ENCODE measurements at regions of chr12 and their contacts with region 1.

Region 1: GRCh38 chr12:108562348-108563135 is at the start of gene ISCU:
- DNase-seq: peak; percentile 98
- H3K4me3 ChIP-seq: peak within 1 kb of the TSS; percentile 81 to 97 (median 86)
- H3K27ac ChIP-seq: peak within 1 kb of the TSS; percentile 93 to 98 (median 96)
- H3K4me1 ChIP-seq: peaks cover 0 to 73% (median 65%) of the 10 kb centered on the region in 4 donors
- H3K27me3 ChIP-seq: no peaks in the 10 kb centered on the region
- CTCF ChIP-seq: no peak
- EP300 ChIP-seq: no peak
- POLR2A ChIP-seq: peak; percentile 82 to 91
- total RNA-seq, gene ISCU: 197 to 294 (median 260) TPM

Region 2: DNA sequence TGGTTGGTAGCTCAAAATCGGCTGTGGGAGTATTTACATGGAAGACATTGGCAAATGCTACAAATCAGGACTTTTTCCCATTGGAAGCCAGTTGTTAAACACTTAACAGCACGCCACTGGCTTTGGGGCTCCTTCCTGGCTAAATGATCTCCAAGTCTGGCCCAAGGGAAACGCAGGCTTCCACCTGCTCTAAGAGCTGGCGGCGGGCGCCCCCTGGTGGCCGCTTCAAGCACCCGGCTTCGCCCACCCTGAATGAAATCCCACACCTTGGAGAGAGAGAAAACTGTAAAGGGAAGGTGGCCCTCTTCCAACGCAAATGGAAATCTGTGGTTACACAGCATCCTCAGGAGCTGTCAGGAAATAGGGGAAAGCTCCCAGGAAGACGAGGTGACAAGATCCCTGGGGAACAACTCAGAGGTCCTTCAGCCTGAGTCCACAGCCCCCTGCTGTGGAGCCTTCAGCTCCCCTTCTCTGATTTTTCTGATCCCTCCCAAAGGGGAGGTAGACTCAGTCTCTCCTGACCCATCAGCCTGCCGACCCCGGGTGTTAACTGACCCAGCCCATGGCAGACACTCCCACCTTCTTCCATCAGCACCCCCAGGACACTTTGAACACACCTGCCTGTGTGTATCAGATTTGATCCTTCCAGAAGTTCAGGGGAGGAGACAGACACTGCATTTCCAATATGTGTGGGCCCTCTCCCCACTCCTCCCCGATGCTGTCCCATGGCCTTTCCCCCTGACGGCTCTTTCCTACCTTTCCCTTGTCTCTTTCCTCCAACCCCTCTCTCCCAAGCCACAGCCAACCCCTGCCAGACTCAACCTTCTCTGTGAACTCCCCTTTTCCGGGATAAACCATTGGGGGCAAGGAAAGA is 55.8 kb after region 1 on chr12:
- intact Hi-C with region 1: loop called (anchors 1 kb)
- DNase-seq: peak; percentile 90
- H3K4me3 ChIP-seq: no peak overlapping the region
- H3K27ac ChIP-seq: no peak overlapping the region
- H3K4me1 ChIP-seq: peaks cover 0 to 12% (median 8%) of the 10 kb centered on the region in 4 donors
- H3K27me3 ChIP-seq: no peaks in the 10 kb centered on the region
- CTCF ChIP-seq: peak; percentile 85 to 96 (median 90)
- EP300 ChIP-seq: no peak
- POLR2A ChIP-seq: no peak

Region 3: DNA sequence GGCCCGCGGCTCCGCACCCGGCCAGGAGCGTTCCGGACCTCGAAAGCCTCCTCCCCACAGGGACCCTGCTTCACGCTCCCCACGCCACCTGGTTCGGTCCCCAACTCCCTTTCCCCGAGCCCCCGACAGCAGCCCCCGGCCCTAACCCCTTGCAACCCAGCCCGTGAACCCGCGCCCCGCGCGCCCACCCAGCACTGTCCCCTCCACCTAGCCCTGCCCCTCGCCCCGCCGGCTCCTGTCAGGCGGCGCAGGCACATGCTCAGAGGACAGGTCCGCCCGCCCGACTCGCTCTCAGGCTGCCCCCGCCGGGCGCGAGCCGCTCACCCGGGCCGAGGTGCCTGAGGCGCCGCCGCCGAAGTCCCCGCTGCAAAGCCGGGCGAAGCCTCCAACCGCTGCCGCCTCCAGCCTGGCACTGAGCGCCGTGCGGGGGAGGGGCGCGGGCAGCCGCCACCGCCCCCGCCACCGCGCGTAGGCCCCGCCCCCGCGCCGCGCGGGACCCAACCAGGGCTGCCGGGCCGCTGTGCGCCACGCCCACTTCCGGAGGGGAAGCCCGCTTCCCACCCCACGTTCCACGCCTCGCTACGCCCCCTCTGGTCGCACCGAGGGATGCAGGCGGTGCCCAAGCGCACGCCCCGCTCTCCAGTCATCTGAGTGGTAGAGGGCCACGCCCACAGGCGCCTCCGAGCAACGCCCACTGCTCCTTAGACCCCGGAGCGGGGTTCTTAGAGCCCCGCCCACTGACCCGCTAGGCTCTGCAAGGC is 168.7 kb after region 1 on chr12 and contains the start of gene CORO1C:
- intact Hi-C with region 1: loop called (anchors 2 kb)
- DNase-seq: peak; percentile 98
- H3K4me3 ChIP-seq: peak within 1 kb of the TSS; percentile 98 to 100 (median 99)
- H3K27ac ChIP-seq: peak within 1 kb of the TSS; percentile 99 to 100 (median 100)
- H3K4me1 ChIP-seq: peaks cover 0 to 47% (median 30%) of the 10 kb centered on the region in 4 donors
- H3K27me3 ChIP-seq: no peaks in the 10 kb centered on the region
- CTCF ChIP-seq: peak in 3 of 4 experiments; percentile 75 to 90 (median 78)
- EP300 ChIP-seq: no peak
- POLR2A ChIP-seq: peak in 1 of 2 donors; percentile 82
- total RNA-seq, gene CORO1C: 247 to 569 (median 360) TPM

Region 4: DNA sequence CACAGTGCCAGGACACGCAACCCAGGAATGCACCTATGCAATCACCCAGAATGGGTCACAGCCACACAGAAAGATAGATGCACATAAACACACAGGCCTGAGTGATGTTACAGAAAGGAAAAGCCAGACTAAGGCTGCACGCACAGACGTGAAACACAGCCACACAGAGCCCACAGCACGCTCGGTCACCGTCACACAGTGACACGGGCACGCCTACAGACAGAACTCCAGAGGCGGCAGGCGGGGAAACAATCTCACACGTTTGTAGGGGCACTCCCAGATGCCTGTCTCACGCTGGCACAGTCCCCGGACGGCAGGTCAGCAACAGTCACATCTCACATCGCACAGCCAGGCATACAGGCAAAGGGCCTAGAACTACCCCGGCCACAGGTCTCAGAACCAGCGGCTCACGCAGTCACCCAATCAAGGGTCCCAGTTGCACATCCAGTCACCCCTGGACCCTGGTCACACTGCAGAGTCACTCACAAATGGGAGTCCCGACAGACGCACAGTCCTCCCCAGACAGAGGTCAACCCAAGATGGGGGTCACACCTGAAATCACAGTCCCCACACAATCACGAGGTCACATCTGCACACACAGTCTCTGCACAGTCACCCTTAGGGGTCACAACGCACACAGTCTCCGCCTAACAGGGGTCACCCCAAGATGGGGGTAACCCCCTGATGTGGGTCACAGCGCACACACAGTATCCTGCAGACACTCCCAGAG is 294.1 kb after region 1 on chr12:
- intact Hi-C with region 1: loop called (anchors 2 kb)
- DNase-seq: peak; percentile 87
- H3K4me3 ChIP-seq: peak overlapping the region; percentile 63 to 84 (median 78)
- H3K27ac ChIP-seq: peak overlapping the region; percentile 91 to 99 (median 96)
- H3K4me1 ChIP-seq: peaks cover 0 to 63% (median 55%) of the 10 kb centered on the region in 4 donors
- H3K27me3 ChIP-seq: no peaks in the 10 kb centered on the region
- CTCF ChIP-seq: no peak
- EP300 ChIP-seq: no peak
- POLR2A ChIP-seq: peak in 1 of 2 donors; percentile 22

Region 5: GRCh38 chr12:108950991-108951739 is 388.6 kb after region 1 on chr12:
- intact Hi-C with region 1: loop called (anchors 5 kb)
- DNase-seq: peak; percentile 85
- H3K4me3 ChIP-seq: no peak overlapping the region
- H3K27ac ChIP-seq: no peak overlapping the region
- H3K4me1 ChIP-seq: peaks cover 0 to 9% (median 1%) of the 10 kb centered on the region in 4 donors
- H3K27me3 ChIP-seq: no peaks in the 10 kb centered on the region
- CTCF ChIP-seq: peak; percentile 81 to 92 (median 84)
- EP300 ChIP-seq: no peak
- POLR2A ChIP-seq: no peak

Region 6: DNA sequence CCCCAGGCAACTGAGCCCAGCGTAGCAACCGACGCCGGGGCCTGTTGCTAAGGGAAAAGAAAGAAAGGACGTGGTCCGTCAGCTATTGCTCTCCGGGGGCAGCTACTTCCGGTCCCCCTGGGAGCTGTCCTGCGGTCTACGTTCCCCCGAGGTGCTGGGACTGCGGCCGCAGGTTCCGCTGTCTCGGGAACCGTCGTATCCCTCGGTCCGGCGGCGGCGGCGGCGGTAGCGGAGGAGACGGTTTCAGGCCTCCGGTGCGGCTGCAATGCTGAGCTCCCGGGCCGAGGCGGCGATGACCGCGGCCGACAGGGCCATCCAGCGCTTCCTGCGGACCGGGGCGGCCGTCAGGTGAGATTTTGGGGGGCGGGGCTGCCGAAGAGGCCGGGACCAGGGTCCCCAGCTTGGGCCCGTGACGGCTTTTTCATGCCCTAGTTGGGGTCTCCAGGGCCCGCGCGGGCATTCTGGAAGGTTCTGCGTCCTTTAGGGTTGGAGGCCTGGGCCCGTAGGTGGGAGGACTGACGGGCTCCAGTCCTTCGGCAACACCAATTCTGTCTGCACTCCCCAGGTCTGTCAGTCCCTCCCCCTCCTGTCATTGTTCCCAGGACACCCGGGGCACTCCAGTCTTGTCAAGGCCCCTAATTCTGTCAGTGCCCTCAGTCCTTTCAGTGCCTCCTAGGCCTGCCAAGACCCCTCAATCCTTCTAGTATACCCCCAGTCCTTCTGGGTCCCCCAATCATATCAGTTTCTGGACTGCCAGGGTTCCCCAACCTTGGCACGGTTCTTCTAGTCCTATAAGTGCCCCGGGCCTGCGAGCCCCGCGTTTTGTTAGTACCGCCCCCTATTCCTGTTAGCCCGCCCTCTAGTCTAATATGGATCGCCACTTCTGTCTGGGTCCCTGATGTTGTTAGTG is 490.1 kb after region 1 on chr12 and contains the start of gene USP30:
- intact Hi-C with region 1: loop called (anchors 5 kb)
- DNase-seq: peak; percentile 93
- H3K4me3 ChIP-seq: peak within 1 kb of the TSS; percentile 74 to 99 (median 96)
- H3K27ac ChIP-seq: peak within 1 kb of the TSS; percentile 86 to 88 (median 86)
- H3K4me1 ChIP-seq: peaks cover 0 to 19% (median 15%) of the 10 kb centered on the region in 4 donors
- H3K27me3 ChIP-seq: no peaks in the 10 kb centered on the region
- CTCF ChIP-seq: no peak
- EP300 ChIP-seq: no peak
- POLR2A ChIP-seq: no peak
- total RNA-seq, gene USP30: 9.8 to 15.2 (median 13.1) TPM

Region 7: DNA sequence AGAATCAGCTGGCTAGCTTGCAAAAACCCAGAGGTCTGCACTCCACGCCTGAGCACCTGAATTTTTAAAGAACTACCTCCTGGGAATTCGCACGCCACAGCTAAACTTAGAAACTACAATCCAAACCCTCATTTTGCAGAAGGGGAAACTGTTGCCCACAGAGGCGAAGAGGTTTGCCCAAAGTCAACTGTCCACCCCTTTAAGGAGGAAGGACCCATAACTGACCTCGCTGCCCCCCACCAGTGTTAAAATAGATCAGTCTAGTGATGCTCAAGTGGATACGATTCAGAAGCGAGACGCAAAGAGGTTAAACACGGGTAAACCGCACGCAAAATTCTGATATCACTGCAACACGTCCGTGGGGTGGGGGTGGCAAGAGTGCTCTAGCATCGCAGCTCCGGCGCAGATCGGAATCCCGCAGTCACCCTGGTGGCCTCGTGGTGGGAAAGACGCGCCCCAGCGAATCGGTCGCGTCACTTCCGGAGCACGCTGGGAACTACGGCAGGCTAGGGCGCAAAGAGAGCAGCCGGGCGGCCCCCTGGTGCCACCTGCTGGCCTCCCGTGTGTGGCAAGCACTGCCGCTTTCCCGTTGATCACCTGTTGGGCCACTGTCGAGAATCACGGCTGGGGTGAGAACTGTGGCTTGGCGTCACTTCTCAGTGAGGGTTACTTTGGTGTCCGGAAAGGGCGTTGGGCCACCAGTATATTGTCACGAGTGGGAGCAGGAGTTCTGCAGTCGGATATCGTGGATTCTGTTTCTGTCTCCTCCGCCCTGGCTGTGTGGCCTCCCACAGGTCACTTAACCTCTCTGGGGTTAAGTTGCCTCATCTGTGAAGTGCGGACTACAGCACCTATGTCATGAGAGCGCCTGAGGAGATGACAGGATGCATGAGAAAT is 530.7 kb after region 1 on chr12 and contains the start of gene ALKBH2:
- intact Hi-C with region 1: loop called (anchors 1 kb)
- DNase-seq: peak; percentile 96
- H3K4me3 ChIP-seq: peak within 1 kb of the TSS; percentile 41 to 60 (median 52)
- H3K27ac ChIP-seq: peak within 1 kb of the TSS; percentile 70 to 81 (median 76)
- H3K4me1 ChIP-seq: peaks cover 0 to 32% (median 27%) of the 10 kb centered on the region in 4 donors
- H3K27me3 ChIP-seq: no peaks in the 10 kb centered on the region
- CTCF ChIP-seq: peak; percentile 93 to 98 (median 95)
- EP300 ChIP-seq: peak in 2 of 4 donors; percentile 5 to 82
- POLR2A ChIP-seq: peak in 1 of 2 donors; percentile 17
- total RNA-seq, gene ALKBH2: 11.6 to 29.3 (median 16.5) TPM

Measured in sigmoid colon (tissue), 7 donors.